ENCODE measurements at regions of chr1 and their contacts with region 1.

Region 1: DNA sequence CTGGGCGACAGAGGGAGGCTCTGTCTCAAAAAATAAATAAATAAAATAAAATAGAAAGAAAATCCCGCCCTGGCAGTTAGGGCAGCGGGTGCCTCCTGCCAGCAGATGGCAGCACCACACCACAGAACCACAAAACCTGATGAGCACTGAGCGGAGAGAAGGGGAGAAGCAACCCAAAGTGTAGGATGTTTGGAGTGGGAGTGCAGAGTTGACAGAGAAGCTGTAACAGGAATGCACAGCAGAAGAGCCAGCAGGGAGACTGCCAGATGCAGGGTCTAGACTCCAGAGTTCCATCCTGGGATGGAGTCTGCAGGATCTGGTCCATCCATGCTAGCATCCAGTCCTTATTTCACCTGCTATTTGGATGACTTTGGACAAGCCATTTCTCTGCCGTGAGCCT is 29.7 kb upstream of the KIRREL1 start:
- DNase-seq: peak in 1 of 2 experiments; percentile 69
- H3K4me3 ChIP-seq: no peak overlapping the region
- H3K27ac ChIP-seq: no peak overlapping the region
- H3K4me1 ChIP-seq: no peaks in the 10 kb centered on the region
- H3K27me3 ChIP-seq: peaks cover 31% of the 10 kb centered on the region
- CTCF ChIP-seq: peak; percentile 93

Region 2: DNA sequence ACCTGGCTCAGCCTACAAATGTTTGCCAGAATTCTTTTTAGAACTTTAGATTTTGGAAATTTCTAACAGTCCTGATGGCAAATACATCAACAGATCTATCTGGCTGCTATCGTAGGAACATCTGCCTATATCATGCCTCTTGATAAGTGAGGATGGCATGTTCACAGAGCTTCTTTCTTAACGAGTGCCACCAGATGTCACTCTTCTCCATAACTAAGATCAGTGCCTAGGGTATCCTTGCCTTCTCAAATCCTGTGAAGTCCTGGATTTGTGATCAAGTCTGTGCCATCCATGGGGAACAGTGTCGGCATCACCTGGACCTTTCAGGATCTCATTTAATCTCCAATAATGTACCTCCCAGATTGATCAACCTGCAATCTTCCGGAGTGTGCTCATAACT is 85.7 kb before region 1 on chr1:
- CTCF ChIA-PET with region 1: no interaction called
- POLR2A ChIA-PET with region 1: no interaction called
- intact Hi-C with region 1: loop called (anchors 5 kb)
- DNase-seq: no peak
- H3K4me3 ChIP-seq: no peak overlapping the region
- H3K27ac ChIP-seq: no peak overlapping the region
- H3K4me1 ChIP-seq: no peaks in the 10 kb centered on the region
- H3K27me3 ChIP-seq: peaks cover 5% of the 10 kb centered on the region; the same call in 1 of the 2 replicates
- CTCF ChIP-seq: peak; percentile 43

Region 3: DNA sequence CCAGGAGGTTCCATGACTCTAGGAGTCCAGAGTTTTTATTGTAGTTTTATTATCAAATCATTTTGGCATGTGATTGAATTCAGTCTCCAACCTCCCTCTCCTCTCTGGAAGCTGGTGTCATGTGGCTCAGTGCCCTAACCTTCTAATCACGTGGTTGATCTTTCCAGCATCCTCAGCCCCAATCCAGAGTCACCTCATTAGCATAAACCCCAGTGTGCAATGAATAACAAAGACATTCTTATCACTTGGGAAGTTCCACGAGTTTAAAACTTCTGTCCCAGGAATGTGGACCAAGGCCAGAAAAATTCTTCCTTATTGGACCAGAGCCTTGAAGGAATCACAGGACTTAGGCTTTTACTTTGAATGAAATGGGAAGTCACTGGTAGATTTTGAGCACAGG is 81.9 kb after region 1 on chr1:
- CTCF ChIA-PET with region 1: no interaction called
- POLR2A ChIA-PET with region 1: no interaction called
- intact Hi-C with region 1: no loop called
- DNase-seq: no peak
- H3K4me3 ChIP-seq: no peak overlapping the region
- H3K27ac ChIP-seq: no peak overlapping the region
- H3K4me1 ChIP-seq: no peaks in the 10 kb centered on the region
- H3K27me3 ChIP-seq: no peaks in the 10 kb centered on the region
- CTCF ChIP-seq: no peak

Region 4: DNA sequence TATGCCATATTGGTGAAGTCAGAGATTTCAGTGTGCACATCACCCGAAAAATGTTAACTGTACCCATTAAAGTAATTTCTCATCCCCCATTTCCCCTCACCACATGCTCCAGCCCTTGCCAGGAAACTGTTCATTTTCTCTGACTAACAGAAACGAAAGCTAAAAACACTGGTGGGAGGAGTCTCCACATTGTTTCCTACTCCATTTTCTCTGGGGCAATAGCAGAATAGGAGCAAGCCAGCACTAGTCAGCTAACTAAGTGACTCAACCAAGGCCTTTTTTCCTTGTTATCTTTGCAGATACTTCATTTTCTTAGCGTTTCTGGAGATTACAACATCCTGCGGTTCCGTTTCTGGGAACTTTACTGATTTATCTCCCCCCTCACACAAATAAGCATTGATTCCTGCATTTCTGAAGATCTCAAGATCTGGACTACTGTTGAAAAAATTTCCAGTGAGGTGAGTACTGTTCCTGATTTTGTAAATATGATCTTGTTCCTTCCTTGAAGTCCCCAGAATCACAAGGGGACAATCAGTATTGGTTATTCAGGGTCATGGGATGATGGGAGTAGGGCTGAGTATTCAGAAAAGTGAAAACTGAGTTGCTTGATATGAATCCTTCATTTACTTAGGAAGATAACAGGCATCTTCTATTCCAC is 1046.1 kb after region 1 on chr1 and contains the start of gene IFI16:
- CTCF ChIA-PET with region 1: no interaction called
- POLR2A ChIA-PET with region 1: no interaction called
- intact Hi-C with region 1: loop called (anchors 10 kb)
- DNase-seq: peak in 1 of 2 experiments; percentile 34
- H3K4me3 ChIP-seq: no peak within 1 kb of the TSS
- H3K27ac ChIP-seq: no peak within 1 kb of the TSS
- H3K4me1 ChIP-seq: no peaks in the 10 kb centered on the region
- H3K27me3 ChIP-seq: 0 out of 2 replicates have a peak, but pooled peaks cover 6% of the 10 kb centered on the region
- CTCF ChIP-seq: no peak
- total RNA-seq, gene IFI16: 18.5 and 31.3 TPM in 2 replicates

Region 5: GRCh38 chr1:159071970-159072582 is 1108.4 kb after region 1 on chr1:
- CTCF ChIA-PET with region 1: no interaction called
- POLR2A ChIA-PET with region 1: no interaction called
- intact Hi-C with region 1: loop called (anchors 10 kb)
- DNase-seq: no peak
- H3K4me3 ChIP-seq: no peak overlapping the region
- H3K27ac ChIP-seq: no peak overlapping the region
- H3K4me1 ChIP-seq: no peaks in the 10 kb centered on the region
- H3K27me3 ChIP-seq: no peaks in the 10 kb centered on the region
- CTCF ChIP-seq: peak; percentile 77